ENCODE measurements at regions of chr11 and their contacts with region 1.

Region 1: GRCh38 chr11:119155733-119156492 is 7.1 kb downstream of the ABCG4 start:
- DNase-seq: no peak
- H3K4me3 ChIP-seq: no peak overlapping the region
- H3K27ac ChIP-seq: no peak overlapping the region
- H3K27me3 ChIP-seq: peaks cover 21% of the 10 kb centered on the region
- CTCF ChIP-seq: 0 out of 2 replicates have a peak, but pooled peaks have one; percentile 8

Region 2: DNA sequence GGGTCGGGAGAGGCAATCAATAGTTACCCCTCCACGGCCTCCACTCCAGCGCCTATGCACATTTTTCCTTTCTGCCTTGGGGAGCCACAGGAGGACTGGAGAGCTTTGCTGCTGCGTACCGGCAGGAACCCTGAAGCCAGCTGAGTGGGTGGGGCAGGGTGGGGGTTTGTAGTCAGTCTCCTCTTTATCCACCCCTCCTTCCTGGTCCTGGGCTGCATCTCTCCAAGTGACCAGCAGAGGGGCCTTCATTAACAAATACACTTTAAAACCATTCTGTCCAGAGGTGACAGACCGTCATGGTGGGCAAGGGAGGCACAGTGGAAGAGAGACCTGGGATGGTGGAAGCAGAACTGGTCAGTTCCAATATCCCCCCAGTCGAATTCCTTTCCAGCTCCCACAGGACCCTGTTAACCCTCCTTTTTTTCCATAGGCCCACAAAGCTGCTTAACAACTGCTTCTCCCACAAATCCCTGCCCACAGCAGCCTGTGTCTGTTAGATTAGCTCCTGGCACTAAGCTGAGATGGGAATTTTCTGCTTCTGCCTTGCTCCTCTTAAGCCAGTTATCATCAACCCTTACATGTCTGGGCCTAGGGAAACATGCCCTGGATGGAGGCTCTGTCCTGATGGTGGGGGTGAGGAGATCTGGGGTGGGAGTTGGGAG is 11.0 kb before region 1 on chr11:
- CTCF ChIA-PET with region 1: interaction called, 15 read pairs
- POLR2A ChIA-PET with region 1: no interaction called
- DNase-seq: peak; percentile 32
- H3K4me3 ChIP-seq: no peak overlapping the region
- H3K27ac ChIP-seq: no peak overlapping the region
- H3K27me3 ChIP-seq: peaks cover 26% of the 10 kb centered on the region
- CTCF ChIP-seq: peak; percentile 72

Measured in AG04450 (cell line).